Mammary epithelial cell (primary cell): ENCODE measurements at regions of chr4 and their contacts with region 1.

Region 1: GRCh38 chr4:73308286-73308685 is 49.7 kb upstream of the ANKRD17 start:
- DNase-seq: peak; percentile 15
- H3K4me3 ChIP-seq: no peak overlapping the region
- H3K27ac ChIP-seq: no peak overlapping the region
- H3K4me1 ChIP-seq: no peaks in the 10 kb centered on the region
- H3K27me3 ChIP-seq: no peaks in the 10 kb centered on the region
- CTCF ChIP-seq: peak; percentile 33 to 40

Region 2: DNA sequence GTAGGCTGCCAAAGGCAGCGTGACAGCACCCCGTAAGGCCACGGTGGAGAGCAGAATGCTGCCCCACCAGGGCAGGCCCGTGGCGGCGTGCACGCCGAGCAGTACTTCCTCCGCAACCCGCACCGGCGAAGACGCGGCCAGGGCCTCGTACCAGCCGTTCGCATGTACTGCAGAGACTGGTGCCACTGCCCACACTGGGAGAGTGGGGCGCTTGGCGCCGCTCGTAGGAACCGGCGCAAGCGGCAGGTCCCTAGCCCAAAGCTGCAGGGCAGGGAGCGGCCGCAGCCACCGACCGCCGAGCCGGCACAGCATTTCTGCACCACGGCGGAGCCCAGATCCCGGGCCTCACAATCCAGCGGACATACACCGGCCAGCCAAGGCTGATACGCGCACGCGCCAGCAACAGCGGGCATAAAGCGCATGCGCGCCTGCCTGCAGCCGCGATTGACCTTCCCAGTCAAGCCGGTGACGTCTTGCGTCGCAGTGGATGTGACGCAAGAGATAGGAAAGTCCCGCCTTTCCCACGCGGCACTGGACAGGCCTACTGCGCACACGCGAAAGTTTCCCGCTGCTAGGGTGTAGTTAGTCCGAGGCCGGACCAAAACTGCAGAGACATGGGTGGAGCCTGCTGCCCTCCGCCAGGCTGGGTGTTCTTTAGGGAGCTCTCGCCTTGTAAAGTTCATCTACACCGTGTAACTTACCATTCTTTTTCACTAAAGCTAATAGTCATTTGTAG is 238.8 kb before region 1 on chr4 and contains the start of gene COX18:
- CTCF ChIA-PET with region 1: no interaction called
- dilution Hi-C with region 1: no loop called
- in situ Hi-C with region 1: no loop called
- intact Hi-C with region 1: loop called (anchors 2 kb)
- DNase-seq: peak; percentile 97
- H3K4me3 ChIP-seq: peak within 1 kb of the TSS; percentile 68 to 88 (median 76)
- H3K27ac ChIP-seq: peak within 1 kb of the TSS; percentile 90
- H3K4me1 ChIP-seq: peaks cover 6% of the 10 kb centered on the region
- H3K27me3 ChIP-seq: no peaks in the 10 kb centered on the region
- CTCF ChIP-seq: peak in 1 of 2 donors; percentile 17
- total RNA-seq, gene COX18: 13.5 to 30.5 TPM

Region 3: DNA sequence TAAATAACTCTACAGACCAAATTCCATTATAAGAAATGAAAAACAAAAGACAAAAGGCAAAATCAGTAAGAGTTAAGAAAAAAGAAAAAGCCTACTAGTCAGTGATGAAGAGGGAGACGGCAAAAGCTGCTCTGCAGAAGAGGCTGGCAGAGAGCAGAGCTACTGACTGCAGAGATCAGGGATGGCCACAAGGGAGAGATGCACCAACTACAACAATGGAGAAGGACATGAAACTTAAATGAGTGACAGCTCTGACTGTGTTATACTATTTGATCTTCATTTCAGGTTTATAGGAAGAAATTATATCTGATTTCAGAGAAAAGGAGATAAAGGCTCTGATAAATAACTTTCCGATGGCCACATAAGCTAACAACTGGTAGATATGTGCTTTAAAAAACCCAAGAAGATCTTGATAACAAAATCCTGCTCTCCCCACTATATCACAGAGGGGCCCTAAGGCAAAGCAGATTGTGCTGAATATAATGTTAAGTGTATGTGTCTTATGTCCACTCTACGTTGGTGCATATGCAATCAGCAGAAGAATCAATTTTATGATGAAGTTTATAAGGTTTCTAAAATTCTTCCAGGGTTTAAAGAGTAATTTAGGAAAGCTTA is 180.3 kb before region 1 on chr4:
- CTCF ChIA-PET with region 1: no interaction called
- dilution Hi-C with region 1: no loop called
- in situ Hi-C with region 1: no loop called
- intact Hi-C with region 1: loop called (anchors 5 kb)
- DNase-seq: no peak
- H3K4me3 ChIP-seq: no peak overlapping the region
- H3K27ac ChIP-seq: no peak overlapping the region
- H3K4me1 ChIP-seq: no peaks in the 10 kb centered on the region
- H3K27me3 ChIP-seq: no peaks in the 10 kb centered on the region
- CTCF ChIP-seq: peak; percentile 9 to 33